GM12878 (cell line): ENCODE measurements at regions of chr14 and their contacts with region 1.

Region 1: GRCh38 chr14:105861985-105862465 is 335.6 kb downstream of the TMEM121 start:
- DNase-seq: peak; percentile 88
- ATAC-seq: peak; percentile 41
- H3K4me3 ChIP-seq: peak overlapping the region; percentile 84
- H3K27ac ChIP-seq: peak overlapping the region; percentile 98
- H3K4me1 ChIP-seq: no peaks in the 10 kb centered on the region
- H3K27me3 ChIP-seq: no peaks in the 10 kb centered on the region
- CTCF ChIP-seq: no peak
- EP300 ChIP-seq: peak; percentile 99 to 100
- POLR2A ChIP-seq: no peak
- RAD21 ChIP-seq: no peak

Region 2: GRCh38 chr14:105581551-105582341 is 280.3 kb before region 1 on chr14:
- CTCF ChIA-PET with region 1: no interaction called
- POLR2A ChIA-PET with region 1: no interaction called
- RAD21 ChIA-PET with region 1: no interaction called
- SMC1A ChIA-PET with region 1: no interaction called
- in situ Hi-C with region 1: no loop called
- intact Hi-C with region 1: loop called (anchors 5 kb)
- DNase-seq: peak; percentile 71
- ATAC-seq: peak; percentile 68
- H3K4me3 ChIP-seq: no peak overlapping the region
- H3K27ac ChIP-seq: peak overlapping the region; percentile 99
- H3K4me1 ChIP-seq: peaks cover 40% of the 10 kb centered on the region
- H3K27me3 ChIP-seq: no peaks in the 10 kb centered on the region
- CTCF ChIP-seq: no peak
- EP300 ChIP-seq: peak; percentile 74 to 94
- POLR2A ChIP-seq: no peak; the same call in 1 of the 2 replicates
- RAD21 ChIP-seq: no peak

Region 3: GRCh38 chr14:105817971-105818711 is 43.9 kb before region 1 on chr14:
- CTCF ChIA-PET with region 1: interaction called, 7 read pairs
- POLR2A ChIA-PET with region 1: interaction called, 6 read pairs
- RAD21 ChIA-PET with region 1: interaction called, 20 read pairs
- SMC1A ChIA-PET with region 1: interaction called, 5 read pairs
- in situ Hi-C with region 1: no loop called
- intact Hi-C with region 1: no loop called
- DNase-seq: peak; percentile 71
- ATAC-seq: peak; percentile 95
- H3K4me3 ChIP-seq: no peak overlapping the region
- H3K27ac ChIP-seq: peak overlapping the region; percentile 31
- H3K4me1 ChIP-seq: peaks cover 16% of the 10 kb centered on the region
- H3K27me3 ChIP-seq: no peaks in the 10 kb centered on the region
- CTCF ChIP-seq: no peak
- EP300 ChIP-seq: peak in 1 of 2 experiments; percentile 31; a peak in 1 of 4 replicates
- POLR2A ChIP-seq: no peak
- RAD21 ChIP-seq: no peak

Region 4: DNA sequence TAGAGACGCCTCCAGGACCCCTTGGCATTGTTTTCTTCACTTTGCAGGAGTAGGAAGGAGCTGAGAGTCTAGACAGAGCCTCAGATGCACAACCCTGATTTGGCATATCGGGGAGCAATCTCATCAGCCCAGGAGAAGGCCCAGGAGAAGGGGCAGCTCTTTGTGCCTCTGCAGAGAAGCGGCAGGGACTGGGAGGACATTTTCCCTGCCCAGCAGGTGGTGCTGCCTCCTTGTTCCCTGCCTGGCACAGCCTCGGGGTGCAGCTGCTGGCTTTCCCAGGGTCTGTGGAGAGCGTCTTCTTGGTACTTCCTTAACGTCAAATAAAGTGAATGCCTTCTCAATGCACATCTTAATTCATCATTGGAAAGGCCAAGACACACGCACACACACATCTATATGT is 83.9 kb after region 1 on chr14:
- CTCF ChIA-PET with region 1: no interaction called
- POLR2A ChIA-PET with region 1: no interaction called
- RAD21 ChIA-PET with region 1: no interaction called
- SMC1A ChIA-PET with region 1: no interaction called
- in situ Hi-C with region 1: no loop called
- intact Hi-C with region 1: no loop called
- DNase-seq: no peak
- ATAC-seq: no peak
- H3K4me3 ChIP-seq: no peak overlapping the region
- H3K27ac ChIP-seq: no peak overlapping the region
- H3K4me1 ChIP-seq: peaks cover 2% of the 10 kb centered on the region; the same call in 1 of the 2 replicates
- H3K27me3 ChIP-seq: no peaks in the 10 kb centered on the region
- CTCF ChIP-seq: no peak; a peak in 1 of 6 replicates
- EP300 ChIP-seq: no peak
- POLR2A ChIP-seq: no peak
- RAD21 ChIP-seq: peak; percentile 21; the same call in 1 of the 2 replicates

Region 5: GRCh38 chr14:106210652-106211051 is 348.6 kb after region 1 on chr14:
- CTCF ChIA-PET with region 1: interaction called, 3 read pairs
- POLR2A ChIA-PET with region 1: no interaction called
- RAD21 ChIA-PET with region 1: interaction called, 4 read pairs
- SMC1A ChIA-PET with region 1: interaction called, 3 read pairs
- in situ Hi-C with region 1: no loop called
- intact Hi-C with region 1: loop called (anchors 5 kb)
- DNase-seq: no peak
- ATAC-seq: no peak
- H3K4me3 ChIP-seq: no peak overlapping the region
- H3K27ac ChIP-seq: no peak overlapping the region
- H3K4me1 ChIP-seq: no peaks in the 10 kb centered on the region
- H3K27me3 ChIP-seq: no peaks in the 10 kb centered on the region; a peak in 1 of 4 replicates
- CTCF ChIP-seq: no peak; a peak in 1 of 6 replicates
- EP300 ChIP-seq: no peak
- POLR2A ChIP-seq: no peak
- RAD21 ChIP-seq: no peak

Region 6: DNA sequence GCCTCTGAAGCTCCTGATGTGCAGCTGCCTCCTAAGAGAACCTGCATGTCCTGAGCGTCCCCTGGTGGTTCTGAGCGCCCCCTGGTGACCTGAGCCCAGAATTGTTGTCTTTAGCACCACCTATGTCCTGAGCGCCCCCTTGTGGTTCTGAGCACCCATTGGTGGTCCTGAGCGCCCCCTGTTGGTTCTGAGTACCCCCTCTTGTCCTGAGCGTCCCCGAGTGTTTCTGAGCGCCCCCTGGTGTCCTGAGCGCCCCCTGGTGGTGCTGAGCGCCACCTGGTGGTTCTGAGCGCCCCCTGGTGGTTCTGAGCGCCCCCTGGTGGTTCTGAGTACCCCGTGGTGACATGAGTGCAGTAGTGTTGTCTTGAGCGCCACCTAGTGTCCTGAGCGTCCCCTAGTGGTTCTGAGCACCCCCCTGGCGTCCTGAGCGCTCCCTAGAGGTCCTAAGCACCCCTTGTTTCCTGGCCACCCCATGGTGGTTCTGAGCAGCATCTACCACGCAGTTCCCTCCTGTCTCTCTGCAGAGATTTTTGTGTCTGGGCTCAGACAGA is 446.9 kb after region 1 on chr14:
- CTCF ChIA-PET with region 1: interaction called, 39 read pairs
- POLR2A ChIA-PET with region 1: no interaction called
- RAD21 ChIA-PET with region 1: interaction called, 6 read pairs
- SMC1A ChIA-PET with region 1: interaction called, 3 read pairs
- in situ Hi-C with region 1: no loop called
- intact Hi-C with region 1: no loop called
- DNase-seq: peak; percentile 83
- ATAC-seq: peak; percentile 99
- H3K4me3 ChIP-seq: no peak overlapping the region
- H3K27ac ChIP-seq: no peak overlapping the region
- H3K4me1 ChIP-seq: peaks cover 6% of the 10 kb centered on the region
- H3K27me3 ChIP-seq: no peaks in the 10 kb centered on the region
- CTCF ChIP-seq: peak; percentile 85 to 100 (median 100); a peak in 5 of 6 replicates
- EP300 ChIP-seq: no peak
- POLR2A ChIP-seq: no peak
- RAD21 ChIP-seq: peak; percentile 50